Activated naive CD4-positive, alpha-beta T cell treated with anti-CD3 and anti-CD28 coated beads, Interleukin-2, amount 10 ng/mL, durations not matched to agents 7 days and 5 days (primary cell): ENCODE measurements at regions of chr12 and their contacts with region 1.

Region 1: GRCh38 chr12:107607464-107608392 is 77.9 kb upstream of the PWP1 start:
- DNase-seq: peak; percentile 85
- H3K4me3 Mint-ChIP-seq: no peak overlapping the region
- H3K27ac Mint-ChIP-seq: no peak overlapping the region
- H3K4me1 Mint-ChIP-seq: no peaks in the 10 kb centered on the region
- H3K27me3 Mint-ChIP-seq: no peaks in the 10 kb centered on the region

Region 2: GRCh38 chr12:107622005-107622404 is 14.3 kb after region 1 on chr12:
- CTCF ChIA-PET with region 1: interaction called, 25 read pairs
- DNase-seq: no peak
- H3K4me3 Mint-ChIP-seq: no peak overlapping the region
- H3K27ac Mint-ChIP-seq: peak overlapping the region; percentile 7
- H3K4me1 Mint-ChIP-seq: no peaks in the 10 kb centered on the region
- H3K27me3 Mint-ChIP-seq: no peaks in the 10 kb centered on the region